Caco-2 (cell line): ENCODE measurements at regions of chr16 and their contacts with region 1.

Region 1: DNA sequence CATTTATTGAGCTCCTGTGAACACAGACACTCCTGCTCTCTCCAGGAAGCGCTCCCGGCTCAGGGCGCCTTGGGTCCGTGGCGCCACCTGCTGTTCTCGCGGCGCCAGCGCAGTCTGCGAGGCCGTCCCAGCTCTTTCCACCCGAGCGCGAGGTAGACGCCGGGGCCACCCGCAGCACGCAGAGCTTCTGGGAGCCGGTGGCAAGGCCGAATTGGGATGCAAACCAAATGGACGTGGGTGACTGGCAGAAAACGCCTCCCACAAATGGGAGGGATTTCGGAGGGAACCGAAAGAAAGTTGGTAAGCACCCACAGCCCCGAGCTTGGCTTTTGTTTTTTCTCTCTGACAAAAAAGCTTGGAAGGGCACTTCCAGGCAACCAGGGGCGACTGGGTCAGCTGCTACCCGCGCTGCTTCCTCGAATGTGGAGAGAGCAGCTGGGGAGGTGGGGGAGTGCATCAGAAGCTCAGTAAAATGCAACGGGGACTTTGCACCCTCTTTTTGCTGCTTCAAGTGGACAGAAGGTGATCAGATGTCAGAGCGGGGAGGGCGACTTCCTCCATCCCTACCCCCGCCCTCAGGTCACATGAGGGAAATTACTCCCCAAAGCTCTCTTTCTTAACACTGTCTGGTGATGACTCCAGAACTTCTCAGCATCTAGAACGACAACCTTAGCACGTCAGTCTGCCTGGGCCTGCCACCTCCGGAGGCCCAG is 13.5 kb upstream of the N4BP1 start:
- DNase-seq: peak; percentile 86 to 93
- H3K4me3 ChIP-seq: peak overlapping the region; percentile 53
- H3K4me3 Mint-ChIP-seq: peak overlapping the region; percentile 73
- H3K27ac Mint-ChIP-seq: peak overlapping the region; percentile 78
- H3K4me1 ChIP-seq: 0 out of 2 replicates have a peak, but pooled peaks cover 4% of the 10 kb centered on the region
- H3K4me1 Mint-ChIP-seq: no peaks in the 10 kb centered on the region
- H3K27me3 ChIP-seq: no peaks in the 10 kb centered on the region
- H3K27me3 Mint-ChIP-seq: no peaks in the 10 kb centered on the region
- CTCF ChIP-seq: peak; percentile 98 to 99

Region 2: DNA sequence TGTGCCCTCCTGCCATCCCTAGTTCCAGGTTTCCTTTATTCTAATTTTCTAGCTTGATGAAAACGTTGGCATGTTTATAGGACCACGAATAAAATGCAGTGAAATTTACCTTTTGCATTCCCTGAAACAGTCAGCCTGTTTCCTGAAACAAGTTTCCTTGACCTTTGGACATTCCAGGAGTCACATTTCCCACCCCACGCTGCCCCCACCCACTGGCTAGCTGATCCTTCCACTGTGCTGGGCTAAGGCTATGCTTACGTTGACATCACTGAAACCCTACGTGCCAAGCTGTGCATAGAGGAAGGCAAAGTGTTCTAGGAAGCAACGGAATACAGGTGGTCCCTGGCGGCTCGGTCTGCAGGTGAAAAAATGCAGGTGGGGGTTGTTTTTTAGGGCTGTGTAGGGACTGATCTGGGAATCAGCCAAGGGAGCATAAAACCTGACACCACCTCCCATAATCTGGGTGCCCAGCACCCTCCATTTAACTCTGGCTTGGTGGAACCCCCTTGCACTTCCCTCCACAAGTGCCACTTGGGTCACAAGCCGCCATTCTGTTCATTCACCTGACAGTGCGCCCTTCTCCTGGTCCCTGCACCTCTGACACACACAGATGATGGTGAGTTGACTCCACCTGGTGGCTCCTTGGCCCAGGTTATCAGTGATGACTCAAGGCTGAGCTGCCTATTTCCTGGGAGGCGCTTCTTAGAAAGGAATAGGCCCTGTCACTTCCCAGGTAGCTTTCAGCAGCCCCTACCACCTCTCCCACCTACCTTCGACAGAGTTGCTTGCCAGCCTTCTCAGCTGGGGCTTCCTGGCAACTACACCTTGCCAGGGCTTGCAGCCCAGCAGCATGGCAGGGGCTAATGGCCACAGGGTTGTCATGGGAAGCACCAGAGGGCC is 97.2 kb before region 1 on chr16:
- CTCF ChIA-PET with region 1: interaction called, 49 read pairs
- POLR2A ChIA-PET with region 1: interaction called, 4 read pairs
- intact Hi-C with region 1: loop called (anchors 1 kb)
- DNase-seq: peak; percentile 88 to 92
- H3K4me3 ChIP-seq: peak overlapping the region; percentile 22
- H3K4me3 Mint-ChIP-seq: peak overlapping the region; percentile 73
- H3K27ac Mint-ChIP-seq: peak overlapping the region; percentile 88
- H3K4me1 ChIP-seq: peaks cover 25% of the 10 kb centered on the region
- H3K4me1 Mint-ChIP-seq: peaks cover 27% of the 10 kb centered on the region
- H3K27me3 ChIP-seq: no peaks in the 10 kb centered on the region
- H3K27me3 Mint-ChIP-seq: no peaks in the 10 kb centered on the region
- CTCF ChIP-seq: peak; percentile 80 to 92

Region 3: GRCh38 chr16:48542020-48542473 is 81.4 kb before region 1 on chr16:
- CTCF ChIA-PET with region 1: interaction called, 13 read pairs
- POLR2A ChIA-PET with region 1: no interaction called
- intact Hi-C with region 1: loop called (anchors 1 kb)
- DNase-seq: no peak
- H3K4me3 ChIP-seq: no peak overlapping the region
- H3K4me3 Mint-ChIP-seq: no peak overlapping the region
- H3K27ac Mint-ChIP-seq: no peak overlapping the region
- H3K4me1 ChIP-seq: peaks cover 4% of the 10 kb centered on the region
- H3K4me1 Mint-ChIP-seq: no peaks in the 10 kb centered on the region
- H3K27me3 ChIP-seq: no peaks in the 10 kb centered on the region
- H3K27me3 Mint-ChIP-seq: no peaks in the 10 kb centered on the region
- CTCF ChIP-seq: peak in 1 of 2 experiments; percentile 41

Region 4: DNA sequence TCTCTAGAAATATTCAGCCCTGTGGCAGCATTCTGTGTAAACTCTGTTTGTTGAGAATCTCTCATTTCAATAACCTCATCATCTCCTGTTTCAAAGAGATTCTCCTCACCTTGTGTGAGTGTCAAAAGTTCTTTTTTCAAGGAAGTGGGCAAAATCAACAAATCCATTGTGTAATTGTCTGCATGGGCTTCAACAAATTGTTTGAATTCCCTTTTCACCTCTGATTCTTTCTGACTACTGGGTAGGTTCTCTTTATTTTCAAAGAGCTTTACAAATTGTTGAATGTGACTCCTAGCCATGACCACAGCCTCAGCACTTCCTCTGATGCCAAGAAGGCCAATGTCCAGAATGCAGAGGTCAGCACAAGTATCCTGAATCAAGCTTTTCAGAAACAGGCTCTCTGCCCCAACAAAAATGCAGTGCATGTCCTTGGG is 61.5 kb before region 1 on chr16:
- CTCF ChIA-PET with region 1: interaction called, 14 read pairs
- POLR2A ChIA-PET with region 1: no interaction called
- intact Hi-C with region 1: no loop called
- DNase-seq: no peak
- H3K4me3 ChIP-seq: no peak overlapping the region
- H3K4me3 Mint-ChIP-seq: no peak overlapping the region
- H3K27ac Mint-ChIP-seq: no peak overlapping the region
- H3K4me1 ChIP-seq: peaks cover 7% of the 10 kb centered on the region; the same call in 1 of the 2 replicates
- H3K4me1 Mint-ChIP-seq: peaks cover 1% of the 10 kb centered on the region
- H3K27me3 ChIP-seq: no peaks in the 10 kb centered on the region
- H3K27me3 Mint-ChIP-seq: no peaks in the 10 kb centered on the region
- CTCF ChIP-seq: no peak

Region 5: DNA sequence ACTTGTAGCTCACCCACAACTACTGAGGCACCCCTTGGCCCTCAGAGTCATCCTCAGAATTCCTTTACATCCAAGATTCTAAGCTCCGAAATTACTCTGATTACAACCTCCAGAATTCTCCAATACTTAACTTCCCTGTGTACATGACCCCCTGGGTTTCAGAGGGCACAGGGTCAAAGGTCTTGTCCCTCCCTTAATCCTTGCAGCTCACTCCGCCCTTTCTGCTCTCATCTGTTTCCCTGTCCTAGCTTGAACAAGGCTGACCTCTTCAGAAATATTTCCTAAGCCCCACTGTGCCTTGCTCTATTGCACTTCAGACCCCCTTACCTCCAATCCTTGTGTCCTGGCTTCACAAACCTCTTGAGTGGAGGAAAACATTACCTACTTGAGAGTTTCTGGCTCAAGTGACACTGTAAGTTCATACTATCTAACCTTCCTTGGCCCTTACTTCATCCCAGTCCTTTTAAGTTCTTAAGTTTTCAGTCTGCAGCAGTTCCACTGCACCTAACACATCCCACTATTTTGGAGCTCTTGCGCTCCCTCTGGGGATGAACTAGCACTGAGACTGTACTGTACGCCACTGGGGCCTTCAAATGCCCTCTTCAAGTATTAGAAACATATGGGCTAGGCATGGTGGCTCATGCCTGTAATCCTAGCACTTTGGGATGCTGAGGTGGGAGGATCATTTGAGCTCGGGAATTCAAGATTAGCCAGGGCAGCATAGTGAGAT is 19.6 kb before region 1 on chr16:
- CTCF ChIA-PET with region 1: interaction called, 19 read pairs
- POLR2A ChIA-PET with region 1: no interaction called
- intact Hi-C with region 1: loop called (anchors 2 kb)
- DNase-seq: no peak
- H3K4me3 ChIP-seq: no peak overlapping the region
- H3K4me3 Mint-ChIP-seq: peak overlapping the region; percentile 5
- H3K27ac Mint-ChIP-seq: no peak overlapping the region
- H3K4me1 ChIP-seq: peaks cover 32% of the 10 kb centered on the region
- H3K4me1 Mint-ChIP-seq: peaks cover 24% of the 10 kb centered on the region
- H3K27me3 ChIP-seq: no peaks in the 10 kb centered on the region
- H3K27me3 Mint-ChIP-seq: no peaks in the 10 kb centered on the region
- CTCF ChIP-seq: no peak

Region 6: GRCh38 chr16:48831076-48831722 is 207.7 kb after region 1 on chr16:
- CTCF ChIA-PET with region 1: no interaction called
- POLR2A ChIA-PET with region 1: no interaction called
- intact Hi-C with region 1: no loop called
- DNase-seq: peak in 1 of 2 experiments; percentile 34
- H3K4me3 ChIP-seq: no peak overlapping the region
- H3K4me3 Mint-ChIP-seq: no peak overlapping the region
- H3K27ac Mint-ChIP-seq: no peak overlapping the region
- H3K4me1 ChIP-seq: no peaks in the 10 kb centered on the region
- H3K4me1 Mint-ChIP-seq: no peaks in the 10 kb centered on the region
- H3K27me3 ChIP-seq: no peaks in the 10 kb centered on the region
- H3K27me3 Mint-ChIP-seq: peaks cover 3% of the 10 kb centered on the region
- CTCF ChIP-seq: peak; percentile 34 to 46